Aorta (tissue), 5 donors: ENCODE measurements at regions of chr17 and their contacts with region 1.

Region 1: DNA sequence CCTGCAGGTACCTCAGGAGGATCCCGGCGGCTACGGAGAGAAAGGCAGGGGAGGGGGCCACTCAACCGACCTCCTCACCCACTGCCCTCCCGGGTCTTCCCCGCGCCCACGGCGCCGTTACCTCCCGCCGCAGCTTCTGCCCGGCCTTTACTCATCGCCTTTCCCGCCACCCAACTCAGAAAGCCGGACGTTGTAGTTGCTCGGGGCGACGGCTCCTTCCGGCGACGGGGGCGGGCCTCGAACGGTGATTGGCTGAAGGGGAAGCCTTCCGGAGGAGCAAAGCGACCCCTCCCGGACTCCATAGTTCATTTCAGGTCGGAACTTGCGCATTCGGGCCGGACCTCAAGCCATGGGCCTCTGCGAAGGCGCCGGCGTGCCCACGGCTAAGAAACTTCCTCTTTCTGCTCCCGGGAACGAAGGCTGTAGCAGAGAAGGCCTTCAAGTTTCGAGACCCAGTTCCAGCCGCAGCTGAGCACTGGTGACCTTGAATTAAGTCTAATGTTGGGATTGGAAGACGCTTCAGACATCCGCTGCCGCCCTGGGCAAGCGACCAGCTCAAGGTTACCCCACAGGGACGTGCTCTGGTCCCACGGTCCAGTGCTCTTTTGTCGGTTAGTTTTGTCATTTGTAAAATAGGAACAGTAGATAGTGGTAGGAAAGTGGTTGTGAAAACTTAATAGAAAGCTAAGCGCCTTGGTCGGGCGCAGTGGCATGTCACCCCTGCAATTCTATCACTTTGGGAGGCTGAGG is at the start of gene PSMC3IP:
- DNase-seq: peak; percentile 97 to 99
- ATAC-seq: peak; percentile 96
- H3K4me3 ChIP-seq: peak within 1 kb of the TSS; percentile 39 to 93
- H3K27ac ChIP-seq: peak within 1 kb of the TSS in 1 of 2 donors; percentile 91
- H3K4me1 ChIP-seq: no peaks in the 10 kb centered on the region
- H3K27me3 ChIP-seq: no peaks in the 10 kb centered on the region
- total RNA-seq, gene PSMC3IP: 3.9 to 5.2 TPM

Region 2: DNA sequence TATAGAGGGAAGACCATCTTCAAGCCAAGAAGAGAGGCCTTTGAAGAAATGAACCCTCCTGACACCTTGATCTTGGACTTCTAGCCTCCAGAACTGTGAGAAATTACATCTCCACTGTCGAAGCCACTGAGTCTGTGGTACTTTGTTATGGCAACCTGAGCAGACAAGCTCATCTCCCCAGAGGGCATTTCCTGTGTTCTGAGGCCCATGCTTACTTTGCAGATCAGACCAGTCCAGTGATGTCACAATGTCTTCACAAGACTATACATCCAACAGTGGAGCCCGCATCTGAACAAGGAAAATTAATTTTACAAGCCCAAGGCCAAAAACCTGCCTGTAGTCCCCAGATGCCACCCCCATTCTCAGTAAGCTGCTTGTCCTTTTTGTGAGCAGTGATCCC is 512.5 kb before region 1 on chr17:
- intact Hi-C with region 1: no loop called
- DNase-seq: no peak
- ATAC-seq: no peak
- H3K4me3 ChIP-seq: no peak overlapping the region
- H3K27ac ChIP-seq: no peak overlapping the region
- H3K4me1 ChIP-seq: no peaks in the 10 kb centered on the region
- H3K27me3 ChIP-seq: no peaks in the 10 kb centered on the region

Region 3: GRCh38 chr17:42527273-42527703 is 50.4 kb before region 1 on chr17:
- intact Hi-C with region 1: no loop called
- DNase-seq: peak; percentile 80 to 85
- ATAC-seq: peak; percentile 85
- H3K4me3 ChIP-seq: no peak overlapping the region
- H3K27ac ChIP-seq: no peak overlapping the region
- H3K4me1 ChIP-seq: peaks cover 0 to 2% of the 10 kb centered on the region in 2 donors
- H3K27me3 ChIP-seq: no peaks in the 10 kb centered on the region

Region 4: GRCh38 chr17:42598905-42599304 is 21.2 kb after region 1 on chr17:
- intact Hi-C with region 1: no loop called
- DNase-seq: no peak
- ATAC-seq: no peak
- H3K4me3 ChIP-seq: no peak overlapping the region
- H3K27ac ChIP-seq: no peak overlapping the region
- H3K4me1 ChIP-seq: no peaks in the 10 kb centered on the region
- H3K27me3 ChIP-seq: no peaks in the 10 kb centered on the region

Region 5: GRCh38 chr17:42677921-42678781 is 100.4 kb after region 1 on chr17:
- intact Hi-C with region 1: loop called (anchors 2 to 5 kb)
- DNase-seq: peak; percentile 92 to 95
- ATAC-seq: peak; percentile 69
- H3K4me3 ChIP-seq: peak overlapping the region; percentile 50 to 59
- H3K27ac ChIP-seq: peak overlapping the region in 1 of 2 donors; percentile 92
- H3K4me1 ChIP-seq: no peaks in the 10 kb centered on the region
- H3K27me3 ChIP-seq: no peaks in the 10 kb centered on the region

Region 6: GRCh38 chr17:42760652-42761581 is 183.2 kb after region 1 on chr17 and contains the start of gene RAMP2:
- intact Hi-C with region 1: loop called (anchors 2 to 10 kb)
- DNase-seq: peak; percentile 61 to 83
- ATAC-seq: peak; percentile 53
- H3K4me3 ChIP-seq: peak within 1 kb of the TSS; percentile 23 to 39
- H3K27ac ChIP-seq: no peak within 1 kb of the TSS
- H3K4me1 ChIP-seq: no peaks in the 10 kb centered on the region
- H3K27me3 ChIP-seq: no peaks in the 10 kb centered on the region
- total RNA-seq, gene RAMP2: 27.1 to 77.7 TPM

Region 7: GRCh38 chr17:42832974-42833766 is 255.5 kb after region 1 on chr17 and contains the start of gene PSME3:
- intact Hi-C with region 1: loop called in 1 of 2 experiments (anchors 10 kb)
- DNase-seq: peak; percentile 95 to 98
- ATAC-seq: peak; percentile 96
- H3K4me3 ChIP-seq: peak within 1 kb of the TSS; percentile 68 to 74
- H3K27ac ChIP-seq: peak within 1 kb of the TSS; percentile 14 to 68
- H3K4me1 ChIP-seq: no peaks in the 10 kb centered on the region
- H3K27me3 ChIP-seq: no peaks in the 10 kb centered on the region
- total RNA-seq, gene PSME3: 57.7 to 69.8 TPM